IMR-90 (cell line): ENCODE measurements at regions of chr1 and their contacts with region 1.

Region 1: DNA sequence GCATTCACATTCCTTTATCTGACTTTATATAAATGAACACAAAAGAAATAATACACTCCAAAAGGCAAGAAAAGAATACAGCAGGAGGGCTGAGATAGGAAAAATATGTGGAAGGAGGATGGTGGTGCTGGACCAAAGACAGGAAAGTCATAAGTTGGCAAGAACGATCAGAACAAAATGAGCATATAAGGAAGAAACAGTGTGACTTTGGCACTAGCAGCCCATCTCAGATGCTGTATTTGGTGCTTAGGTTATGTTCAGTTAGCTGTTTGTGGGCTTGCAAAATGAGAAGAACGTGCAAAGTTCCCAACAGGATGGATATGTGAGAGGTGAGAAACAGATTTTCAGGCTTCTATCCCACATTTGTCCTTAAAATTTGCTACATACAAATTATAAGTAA is 719.8 kb upstream of the ADGRL4 start:
- DNase-seq: no peak
- ATAC-seq: no peak
- H3K4me3 ChIP-seq: no peak overlapping the region
- H3K27ac ChIP-seq: no peak overlapping the region; the same call in 1 of the 2 replicates
- H3K4me1 ChIP-seq: no peaks in the 10 kb centered on the region
- H3K27me3 ChIP-seq: no peaks in the 10 kb centered on the region
- CTCF ChIP-seq: no peak
- POLR2A ChIP-seq: no peak
- RAD21 ChIP-seq: no peak

Region 2: DNA sequence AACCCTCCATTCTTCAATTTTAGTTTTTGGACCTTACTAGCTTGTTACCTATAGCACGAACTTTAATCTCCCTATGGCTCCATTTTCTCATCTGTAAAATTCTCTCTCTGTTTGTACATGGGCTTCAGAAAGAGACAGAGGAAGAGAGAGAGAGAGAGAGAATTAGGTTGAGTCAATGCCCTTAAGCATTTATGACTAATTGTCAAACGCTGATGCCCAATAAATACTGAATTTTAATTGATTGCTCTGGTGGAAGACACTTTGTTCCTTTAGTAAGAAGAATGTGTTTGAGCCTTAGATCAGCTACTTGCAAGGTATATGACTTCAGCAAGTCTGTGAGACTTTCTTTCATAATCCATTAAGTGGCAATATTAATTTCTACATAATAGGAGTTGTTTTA is 23.3 kb after region 1 on chr1:
- CTCF ChIA-PET with region 1: no interaction called
- POLR2A ChIA-PET with region 1: no interaction called
- dilution Hi-C with region 1: no loop called
- in situ Hi-C with region 1: no loop called
- intact Hi-C with region 1: loop called (anchors 2 kb)
- DNase-seq: no peak
- ATAC-seq: no peak
- H3K4me3 ChIP-seq: no peak overlapping the region
- H3K27ac ChIP-seq: no peak overlapping the region
- H3K4me1 ChIP-seq: no peaks in the 10 kb centered on the region
- H3K27me3 ChIP-seq: no peaks in the 10 kb centered on the region
- CTCF ChIP-seq: no peak
- POLR2A ChIP-seq: no peak
- RAD21 ChIP-seq: no peak

Region 3: GRCh38 chr1:79839882-79840281 is 113.6 kb after region 1 on chr1:
- CTCF ChIA-PET with region 1: no interaction called
- POLR2A ChIA-PET with region 1: no interaction called
- dilution Hi-C with region 1: no loop called
- in situ Hi-C with region 1: no loop called
- intact Hi-C with region 1: no loop called
- DNase-seq: no peak
- ATAC-seq: no peak
- H3K4me3 ChIP-seq: no peak overlapping the region
- H3K27ac ChIP-seq: no peak overlapping the region
- H3K4me1 ChIP-seq: peaks cover 2% of the 10 kb centered on the region; the same call in 1 of the 2 replicates
- H3K27me3 ChIP-seq: no peaks in the 10 kb centered on the region
- CTCF ChIP-seq: no peak
- POLR2A ChIP-seq: no peak
- RAD21 ChIP-seq: no peak